ENCODE measurements at regions of chr11 and their contacts with region 1.

Region 1: GRCh38 chr11:11189506-11189905 is 163.5 kb downstream of the CSNK2A3 start:
- DNase-seq: no peak
- H3K4me3 ChIP-seq: no peak overlapping the region
- H3K27ac ChIP-seq: peak overlapping the region in 2 of 4 donors; percentile 12 to 27
- H3K4me1 ChIP-seq: peaks cover 0 to 15% (median 9%) of the 10 kb centered on the region in 4 donors
- H3K27me3 ChIP-seq: no peaks in the 10 kb centered on the region
- CTCF ChIP-seq: no peak
- EP300 ChIP-seq: no peak
- POLR2A ChIP-seq: no peak

Region 2: GRCh38 chr11:11207428-11207827 is 17.9 kb after region 1 on chr11:
- intact Hi-C with region 1: loop called (anchors 1 kb)
- DNase-seq: no peak
- H3K4me3 ChIP-seq: no peak overlapping the region
- H3K27ac ChIP-seq: no peak overlapping the region
- H3K4me1 ChIP-seq: peaks cover 0 to 21% (median 13%) of the 10 kb centered on the region in 4 donors
- H3K27me3 ChIP-seq: no peaks in the 10 kb centered on the region
- CTCF ChIP-seq: no peak
- EP300 ChIP-seq: no peak
- POLR2A ChIP-seq: no peak

Region 3: GRCh38 chr11:11349870-11350337 is 160.4 kb after region 1 on chr11:
- intact Hi-C with region 1: no loop called
- DNase-seq: no peak
- H3K4me3 ChIP-seq: no peak overlapping the region
- H3K27ac ChIP-seq: peak overlapping the region in 2 of 4 donors; percentile 41 to 47
- H3K4me1 ChIP-seq: peaks cover 0 to 39% (median 29%) of the 10 kb centered on the region in 4 donors
- H3K27me3 ChIP-seq: no peaks in the 10 kb centered on the region
- CTCF ChIP-seq: no peak
- EP300 ChIP-seq: no peak
- POLR2A ChIP-seq: no peak

Measured in sigmoid colon (tissue), 7 donors.